Calu3 (cell line): ENCODE measurements at regions of chr2 and their contacts with region 1.

Region 1: DNA sequence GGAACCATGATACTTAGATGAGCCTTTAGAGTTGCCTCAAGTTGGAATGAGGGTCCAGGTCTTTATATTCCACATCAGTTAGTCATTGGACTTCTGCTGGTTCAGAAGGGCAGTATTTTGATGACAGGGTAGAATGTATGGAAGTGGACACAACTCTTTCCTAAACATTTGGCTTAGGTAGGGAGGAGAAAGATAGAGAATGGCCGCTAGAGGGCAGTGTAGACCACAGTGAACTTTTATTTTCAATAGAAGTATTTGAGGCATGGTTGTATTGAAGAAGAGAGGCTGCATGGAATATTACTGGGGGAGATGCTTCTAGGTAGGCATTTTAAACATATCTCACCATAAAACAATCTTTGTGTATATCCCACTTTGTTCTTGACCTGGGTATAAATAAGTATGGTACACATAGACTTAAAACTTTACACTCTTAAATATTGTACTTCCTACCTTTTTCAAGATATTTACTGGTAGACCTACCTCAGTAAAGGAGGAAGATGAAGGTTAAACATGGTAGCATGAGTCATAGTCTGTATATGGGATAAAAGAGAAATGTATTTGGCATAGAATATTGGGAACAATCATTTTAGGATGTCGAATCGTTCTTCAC is 497.6 kb upstream of the FAM98A start:
- DNase-seq: peak; percentile 57
- H3K4me3 Mint-ChIP-seq: no peak overlapping the region
- H3K27ac Mint-ChIP-seq: no peak overlapping the region
- H3K4me1 Mint-ChIP-seq: no peaks in the 10 kb centered on the region
- H3K27me3 Mint-ChIP-seq: no peaks in the 10 kb centered on the region
- CTCF ChIP-seq: peak; percentile 69

Region 2: DNA sequence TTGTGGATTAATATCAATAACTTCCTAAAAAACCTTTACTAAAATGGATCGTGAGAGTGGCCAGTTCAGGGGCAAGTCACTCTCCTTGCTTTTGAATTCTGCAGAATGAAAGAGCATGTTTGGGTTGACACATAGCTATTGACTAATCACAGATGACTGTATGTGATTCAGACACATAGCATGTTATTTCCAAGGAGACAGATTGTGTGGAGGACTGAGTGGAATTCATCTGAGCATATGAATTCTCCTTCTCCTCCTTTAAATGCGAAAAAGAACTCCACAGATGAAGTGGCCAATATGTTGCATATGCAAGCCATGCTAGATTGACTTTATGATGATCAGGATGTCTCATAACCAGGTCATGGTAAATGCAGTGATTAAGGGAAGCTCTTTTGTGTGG is 248.2 kb before region 1 on chr2:
- CTCF ChIA-PET with region 1: no interaction called
- intact Hi-C with region 1: no loop called
- DNase-seq: no peak
- H3K4me3 Mint-ChIP-seq: no peak overlapping the region
- H3K27ac Mint-ChIP-seq: no peak overlapping the region
- H3K4me1 Mint-ChIP-seq: no peaks in the 10 kb centered on the region
- H3K27me3 Mint-ChIP-seq: no peaks in the 10 kb centered on the region
- CTCF ChIP-seq: no peak

Region 3: DNA sequence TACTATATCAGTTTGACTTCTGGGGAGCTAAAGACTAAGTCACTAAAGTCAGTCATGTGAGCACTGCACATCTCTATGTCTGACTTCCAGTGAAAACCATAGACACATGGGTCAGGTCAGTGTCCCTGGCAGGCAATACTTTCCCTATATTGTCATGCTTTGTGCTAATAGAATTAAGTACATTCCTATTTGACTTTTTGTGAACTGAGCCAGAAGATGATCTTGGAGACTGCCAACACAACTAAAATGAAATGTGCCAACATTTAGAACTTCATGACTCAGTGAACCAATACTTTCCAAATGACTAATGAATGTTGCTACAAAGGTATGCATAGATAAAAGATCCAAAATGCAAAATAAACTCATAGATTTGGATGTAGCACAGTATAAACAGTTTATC is 323.2 kb after region 1 on chr2:
- CTCF ChIA-PET with region 1: no interaction called
- intact Hi-C with region 1: no loop called
- DNase-seq: no peak
- H3K4me3 Mint-ChIP-seq: no peak overlapping the region
- H3K27ac Mint-ChIP-seq: no peak overlapping the region
- H3K4me1 Mint-ChIP-seq: no peaks in the 10 kb centered on the region
- H3K27me3 Mint-ChIP-seq: no peaks in the 10 kb centered on the region
- CTCF ChIP-seq: no peak

Region 4: GRCh38 chr2:34570266-34570872 is 473.7 kb after region 1 on chr2:
- CTCF ChIA-PET with region 1: no interaction called
- intact Hi-C with region 1: loop called (anchors 2 kb)
- DNase-seq: no peak
- H3K4me3 Mint-ChIP-seq: no peak overlapping the region
- H3K27ac Mint-ChIP-seq: no peak overlapping the region
- H3K4me1 Mint-ChIP-seq: no peaks in the 10 kb centered on the region
- H3K27me3 Mint-ChIP-seq: no peaks in the 10 kb centered on the region
- CTCF ChIP-seq: no peak

Region 5: GRCh38 chr2:34738691-34739090 is 642.0 kb after region 1 on chr2:
- CTCF ChIA-PET with region 1: no interaction called
- intact Hi-C with region 1: loop called (anchors 5 kb)
- DNase-seq: peak; percentile 6
- H3K4me3 Mint-ChIP-seq: no peak overlapping the region
- H3K27ac Mint-ChIP-seq: no peak overlapping the region
- H3K4me1 Mint-ChIP-seq: peaks cover 9% of the 10 kb centered on the region
- H3K27me3 Mint-ChIP-seq: no peaks in the 10 kb centered on the region
- CTCF ChIP-seq: no peak

Region 6: GRCh38 chr2:35410431-35411061 is 1313.9 kb after region 1 on chr2:
- CTCF ChIA-PET with region 1: no interaction called
- intact Hi-C with region 1: loop called (anchors 1 kb)
- DNase-seq: peak; percentile 55
- H3K4me3 Mint-ChIP-seq: no peak overlapping the region
- H3K27ac Mint-ChIP-seq: no peak overlapping the region
- H3K4me1 Mint-ChIP-seq: no peaks in the 10 kb centered on the region
- H3K27me3 Mint-ChIP-seq: no peaks in the 10 kb centered on the region
- CTCF ChIP-seq: peak; percentile 60

Region 7: GRCh38 chr2:35428548-35428947 is 1331.9 kb after region 1 on chr2:
- CTCF ChIA-PET with region 1: no interaction called
- intact Hi-C with region 1: loop called (anchors 5 kb)
- DNase-seq: peak; percentile 40
- H3K4me3 Mint-ChIP-seq: no peak overlapping the region
- H3K27ac Mint-ChIP-seq: no peak overlapping the region
- H3K4me1 Mint-ChIP-seq: no peaks in the 10 kb centered on the region
- H3K27me3 Mint-ChIP-seq: no peaks in the 10 kb centered on the region
- CTCF ChIP-seq: peak; percentile 37